Calu3 (cell line): ENCODE measurements at regions of chr7 and their contacts with region 1.

Region 1: GRCh38 chr7:51162724-51163329 is 153.8 kb downstream of the COBL start:
- DNase-seq: peak; percentile 94
- H3K4me3 Mint-ChIP-seq: no peak overlapping the region
- H3K27ac Mint-ChIP-seq: no peak overlapping the region
- H3K4me1 Mint-ChIP-seq: no peaks in the 10 kb centered on the region
- H3K27me3 Mint-ChIP-seq: no peaks in the 10 kb centered on the region
- CTCF ChIP-seq: peak; percentile 94

Region 2: DNA sequence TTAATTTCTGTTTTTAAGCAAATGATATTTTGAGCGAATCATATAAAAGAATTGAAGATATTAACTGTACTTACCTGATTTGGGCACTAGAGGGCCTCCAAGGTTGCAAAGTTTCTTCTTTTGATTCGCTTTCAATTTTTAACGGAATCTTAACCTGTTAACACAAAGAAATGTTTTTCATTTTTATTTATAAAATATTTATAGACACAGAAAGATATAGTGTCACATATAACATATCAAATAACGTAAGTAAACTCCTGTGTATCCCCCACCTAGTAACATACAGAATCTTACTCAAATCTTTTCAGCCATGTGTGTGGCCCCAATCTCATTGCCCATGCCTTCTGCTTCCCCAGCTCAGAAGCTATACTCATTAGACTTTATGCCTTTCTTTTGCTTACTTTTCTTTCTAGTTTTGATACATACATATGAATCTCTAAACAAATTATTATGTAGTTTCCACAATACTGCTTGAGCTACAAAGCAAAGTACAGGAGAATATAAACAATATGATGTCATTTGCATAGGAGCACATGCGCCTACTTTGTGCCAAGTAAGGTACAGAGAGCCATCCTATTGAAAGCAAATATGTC is 1020.3 kb before region 1 on chr7:
- CTCF ChIA-PET with region 1: no interaction called
- intact Hi-C with region 1: loop called (anchors 2 kb)
- DNase-seq: peak; percentile 29
- H3K4me3 Mint-ChIP-seq: no peak overlapping the region
- H3K27ac Mint-ChIP-seq: no peak overlapping the region
- H3K4me1 Mint-ChIP-seq: no peaks in the 10 kb centered on the region
- H3K27me3 Mint-ChIP-seq: peaks cover 46% of the 10 kb centered on the region
- CTCF ChIP-seq: peak; percentile 73

Region 3: GRCh38 chr7:50467817-50468610 is 694.8 kb before region 1 on chr7:
- CTCF ChIA-PET with region 1: interaction called, 17 read pairs
- intact Hi-C with region 1: loop called (anchors 2 kb)
- DNase-seq: peak; percentile 93
- H3K4me3 Mint-ChIP-seq: peak overlapping the region; percentile 25
- H3K27ac Mint-ChIP-seq: peak overlapping the region; percentile 13
- H3K4me1 Mint-ChIP-seq: no peaks in the 10 kb centered on the region
- H3K27me3 Mint-ChIP-seq: no peaks in the 10 kb centered on the region
- CTCF ChIP-seq: peak; percentile 96

Region 4: DNA sequence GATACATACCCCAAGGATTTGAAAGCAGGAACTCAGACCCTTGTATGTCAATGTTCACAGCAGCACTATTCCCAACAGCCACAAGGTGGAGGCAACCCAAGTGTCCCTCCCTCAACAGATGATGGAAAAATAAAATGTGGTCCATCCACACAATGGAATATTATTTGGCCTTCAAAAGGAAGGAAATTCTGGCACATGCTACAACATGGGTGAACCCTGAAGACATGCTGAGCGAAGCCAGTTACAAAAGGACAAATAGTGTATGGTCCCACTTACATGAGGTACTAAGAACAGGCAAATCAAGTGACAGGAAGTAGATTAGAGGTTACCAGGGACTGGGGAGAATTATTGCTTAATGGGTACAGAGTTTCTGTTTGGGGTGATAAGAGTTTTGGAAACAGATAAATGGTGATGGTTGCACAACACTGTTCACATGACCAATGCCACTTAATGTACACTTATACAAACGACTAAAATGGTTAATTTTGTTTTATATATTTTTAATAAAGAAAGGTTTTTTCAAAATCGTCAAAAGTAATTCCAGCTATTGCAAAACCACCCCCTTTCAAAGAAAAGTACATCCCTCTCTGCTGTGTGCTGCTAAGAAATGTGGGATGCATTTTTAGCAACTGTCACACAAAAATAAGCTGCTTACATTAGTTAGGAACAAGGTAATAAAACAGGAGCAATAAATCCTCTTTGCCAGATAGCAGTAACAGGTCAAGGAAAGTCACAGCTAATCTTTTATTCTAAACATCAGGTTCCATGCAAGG is 465.8 kb before region 1 on chr7:
- CTCF ChIA-PET with region 1: no interaction called
- intact Hi-C with region 1: loop called (anchors 2 kb)
- DNase-seq: peak; percentile 38
- H3K4me3 Mint-ChIP-seq: no peak overlapping the region
- H3K27ac Mint-ChIP-seq: peak overlapping the region; percentile 16
- H3K4me1 Mint-ChIP-seq: peaks cover 15% of the 10 kb centered on the region
- H3K27me3 Mint-ChIP-seq: no peaks in the 10 kb centered on the region
- CTCF ChIP-seq: peak; percentile 79

Region 5: GRCh38 chr7:51034521-51035264 is 128.1 kb before region 1 on chr7:
- CTCF ChIA-PET with region 1: no interaction called
- intact Hi-C with region 1: no loop called
- DNase-seq: peak; percentile 19
- H3K4me3 Mint-ChIP-seq: no peak overlapping the region
- H3K27ac Mint-ChIP-seq: no peak overlapping the region
- H3K4me1 Mint-ChIP-seq: peaks cover 14% of the 10 kb centered on the region
- H3K27me3 Mint-ChIP-seq: no peaks in the 10 kb centered on the region
- CTCF ChIP-seq: no peak

Region 6: DNA sequence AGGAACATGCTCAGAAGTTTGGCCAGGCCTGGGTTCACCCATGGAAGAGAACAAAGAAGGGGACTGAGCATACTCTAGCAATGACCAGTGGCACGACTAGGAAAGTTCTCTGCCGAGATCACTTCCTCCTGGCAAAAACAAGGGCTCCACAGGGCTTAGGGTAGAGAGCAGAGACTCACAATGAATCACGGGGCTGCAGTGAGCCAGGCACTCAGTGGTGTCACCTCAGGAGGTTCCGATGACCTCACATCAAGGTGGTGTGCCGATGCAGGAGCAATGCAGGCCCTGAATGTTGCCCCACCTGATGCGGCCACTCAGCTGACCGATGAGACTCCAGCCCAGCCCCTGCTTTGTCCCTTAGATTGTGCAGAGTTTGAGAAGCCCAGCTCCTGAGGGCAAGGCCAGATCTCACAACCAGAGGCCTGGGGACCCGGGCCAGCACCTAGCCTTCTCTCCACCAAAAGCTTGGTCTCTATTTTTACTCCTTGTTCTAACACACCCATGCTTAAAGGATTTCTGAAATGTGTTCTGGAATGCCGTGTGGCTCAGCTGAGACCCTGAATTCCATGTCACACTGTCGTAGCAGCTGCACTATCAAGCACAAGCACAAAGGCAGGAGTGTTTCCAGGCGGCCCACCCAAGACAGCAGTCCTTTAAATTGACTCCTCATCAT is 92.8 kb after region 1 on chr7:
- CTCF ChIA-PET with region 1: interaction called, 6 read pairs
- intact Hi-C with region 1: loop called (anchors 1 kb)
- DNase-seq: peak; percentile 67
- H3K4me3 Mint-ChIP-seq: peak overlapping the region; percentile 29
- H3K27ac Mint-ChIP-seq: peak overlapping the region; percentile 45
- H3K4me1 Mint-ChIP-seq: peaks cover 65% of the 10 kb centered on the region
- H3K27me3 Mint-ChIP-seq: no peaks in the 10 kb centered on the region
- CTCF ChIP-seq: no peak

Region 7: DNA sequence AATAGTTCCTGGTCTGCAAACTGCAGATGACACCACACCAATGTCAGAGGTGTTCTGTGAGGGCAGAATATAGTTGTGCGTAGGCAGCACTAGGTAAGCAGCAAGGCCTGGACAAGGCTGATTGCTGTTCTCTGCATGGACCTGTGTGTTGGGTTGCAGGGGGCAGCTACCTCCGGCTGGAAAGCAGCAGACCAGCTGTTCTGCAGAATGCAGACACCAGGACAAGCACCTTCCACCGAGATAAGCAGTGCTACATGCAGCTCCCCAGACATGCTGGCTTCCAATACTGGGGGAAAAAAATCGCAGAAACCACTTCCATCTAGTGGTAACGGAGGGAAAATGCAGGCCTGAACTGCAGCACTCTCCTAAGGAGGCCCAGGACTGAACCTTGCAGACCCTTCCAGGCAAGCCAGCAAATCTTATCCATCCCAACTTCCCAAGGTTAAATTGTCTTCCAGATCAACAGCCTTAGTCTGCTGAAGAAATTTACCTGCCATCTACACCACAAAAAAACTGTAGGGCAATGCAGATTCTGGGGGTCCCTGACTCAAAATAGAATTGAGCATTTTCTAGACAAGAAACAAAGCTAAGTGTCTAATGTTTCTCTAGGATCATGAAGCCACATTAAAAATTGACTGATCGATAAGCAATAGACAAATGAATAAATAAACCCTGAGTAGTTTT is 204.2 kb after region 1 on chr7:
- CTCF ChIA-PET with region 1: interaction called, 213 read pairs
- intact Hi-C with region 1: loop called (anchors 1 kb)
- DNase-seq: peak; percentile 76
- H3K4me3 Mint-ChIP-seq: no peak overlapping the region
- H3K27ac Mint-ChIP-seq: no peak overlapping the region
- H3K4me1 Mint-ChIP-seq: peaks cover 9% of the 10 kb centered on the region
- H3K27me3 Mint-ChIP-seq: peaks cover 13% of the 10 kb centered on the region
- CTCF ChIP-seq: peak; percentile 90

Region 8: GRCh38 chr7:51430480-51431086 is 267.8 kb after region 1 on chr7:
- CTCF ChIA-PET with region 1: interaction called, 39 read pairs
- intact Hi-C with region 1: loop called (anchors 1 kb)
- DNase-seq: peak; percentile 82
- H3K4me3 Mint-ChIP-seq: no peak overlapping the region
- H3K27ac Mint-ChIP-seq: no peak overlapping the region
- H3K4me1 Mint-ChIP-seq: no peaks in the 10 kb centered on the region
- H3K27me3 Mint-ChIP-seq: peaks cover 52% of the 10 kb centered on the region
- CTCF ChIP-seq: peak; percentile 97